GM10248 (cell line): ENCODE measurements at regions of chr4 and their contacts with region 1.

Region 1: GRCh38 chr4:6250235-6250983 is 19.2 kb upstream of the WFS1 start:
- DNase-seq: peak; percentile 76
- CTCF ChIP-seq: peak; percentile 73

Region 2: DNA sequence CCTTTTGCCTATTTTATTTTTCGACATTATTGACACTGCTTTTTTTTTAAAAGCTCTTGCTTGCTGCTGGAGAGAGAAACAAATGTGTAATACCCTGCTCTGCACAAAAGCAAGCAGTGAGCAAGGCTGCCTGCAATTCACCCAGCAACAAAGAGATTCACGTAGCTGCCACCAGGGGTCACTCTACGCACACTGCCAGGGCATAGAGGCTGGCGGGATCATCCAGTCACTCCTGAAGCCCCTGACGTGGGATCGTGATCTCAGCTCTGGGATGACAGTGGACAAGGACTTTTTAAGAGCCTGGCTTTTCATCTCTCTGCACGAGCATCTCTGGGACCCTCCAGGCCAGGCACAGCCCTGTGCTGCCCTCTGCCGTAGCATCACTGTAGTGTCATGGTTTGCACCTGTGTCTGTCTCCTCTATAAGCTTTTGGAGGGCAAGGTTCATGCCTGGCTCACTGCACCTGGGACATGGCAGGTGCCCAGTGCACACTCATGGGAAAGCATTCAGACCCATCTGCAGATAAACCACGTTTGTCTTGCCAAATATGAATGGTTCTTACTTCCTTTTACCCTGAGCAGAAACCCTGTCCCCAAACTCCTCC is 252.0 kb before region 1 on chr4:
- CTCF ChIA-PET with region 1: interaction called, 41 read pairs
- POLR2A ChIA-PET with region 1: no interaction called
- DNase-seq: peak; percentile 77
- CTCF ChIP-seq: peak; percentile 85

Region 3: DNA sequence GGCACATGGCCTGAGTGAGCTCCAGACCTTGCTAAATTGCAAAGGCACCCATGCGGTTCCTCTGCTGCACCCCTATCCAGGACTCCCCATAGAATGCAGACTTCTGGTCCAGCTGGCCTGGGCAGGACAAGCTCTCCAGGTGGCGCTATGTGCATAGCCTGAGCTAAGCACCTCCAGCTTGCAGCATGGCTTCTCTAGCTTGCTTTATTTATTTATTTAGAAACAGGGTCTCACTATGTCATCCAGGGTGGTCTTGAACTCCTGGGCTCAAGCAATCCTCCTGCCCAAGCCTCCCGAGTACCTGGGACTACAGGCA is 13.8 kb after region 1 on chr4:
- CTCF ChIA-PET with region 1: interaction called, 94 read pairs
- POLR2A ChIA-PET with region 1: no interaction called
- DNase-seq: peak; percentile 58
- CTCF ChIP-seq: peak; percentile 78

Region 4: GRCh38 chr4:6278801-6279197 is 28.4 kb after region 1 on chr4:
- CTCF ChIA-PET with region 1: interaction called, 21 read pairs
- POLR2A ChIA-PET with region 1: no interaction called
- DNase-seq: peak; percentile 74
- CTCF ChIP-seq: no peak

Region 5: DNA sequence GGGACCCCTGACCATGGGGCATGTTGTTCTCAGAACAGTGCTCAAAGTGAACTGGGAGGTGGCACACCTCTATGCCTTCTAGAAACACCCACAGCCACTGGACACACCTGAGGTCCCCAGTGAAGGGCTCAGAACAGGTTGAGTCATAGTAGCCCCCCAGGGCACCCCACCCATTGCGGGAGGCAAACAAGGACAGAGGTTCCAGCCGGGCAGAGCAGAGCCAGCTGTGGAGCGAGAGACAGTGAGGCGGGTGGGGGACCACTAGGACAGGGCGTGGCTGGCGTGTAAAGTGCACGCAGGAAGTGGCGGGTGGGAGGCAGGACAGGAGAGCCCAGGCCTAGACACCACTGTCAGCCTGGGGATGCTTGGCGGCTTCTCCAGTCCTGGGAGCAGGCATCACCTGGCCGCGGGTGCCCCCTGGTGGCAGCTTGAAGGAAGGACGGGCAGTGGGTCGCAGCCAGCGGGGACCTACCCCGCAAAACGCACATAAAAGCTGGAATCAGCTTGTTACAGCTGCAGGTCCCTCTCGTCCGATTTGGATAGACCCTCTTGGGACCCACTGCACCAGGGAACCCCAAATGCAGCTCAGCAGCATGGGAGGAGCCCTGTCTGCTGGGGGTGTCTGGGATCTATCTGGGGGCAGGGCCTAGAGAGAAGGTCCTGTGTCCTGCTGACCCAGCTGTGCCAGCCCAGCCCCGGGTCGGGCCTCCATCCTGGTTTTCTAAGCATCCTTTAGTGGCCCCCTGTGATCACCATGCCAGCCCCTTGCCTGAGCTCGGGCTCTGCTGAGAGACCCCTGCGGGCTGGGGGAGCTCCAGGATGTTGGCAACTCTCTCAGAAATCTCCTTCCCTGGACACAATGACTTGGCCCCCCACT is 76.9 kb after region 1 on chr4:
- CTCF ChIA-PET with region 1: interaction called, 514 read pairs
- POLR2A ChIA-PET with region 1: no interaction called
- DNase-seq: peak; percentile 90
- CTCF ChIP-seq: peak; percentile 97

Region 6: GRCh38 chr4:6493658-6494304 is 243.4 kb after region 1 on chr4:
- CTCF ChIA-PET with region 1: no interaction called
- POLR2A ChIA-PET with region 1: no interaction called
- DNase-seq: no peak
- CTCF ChIP-seq: no peak

Region 7: GRCh38 chr4:6546681-6547447 is 296.5 kb after region 1 on chr4:
- CTCF ChIA-PET with region 1: interaction called, 30 read pairs
- POLR2A ChIA-PET with region 1: no interaction called
- DNase-seq: peak; percentile 78
- CTCF ChIP-seq: peak; percentile 94